Activated naive CD4-positive, alpha-beta T cell treated with anti-CD3 and anti-CD28 coated beads for 36 hours (primary cell): ENCODE measurements at regions of chr17 and their contacts with region 1.

Region 1: GRCh38 chr17:51153210-51154072 is at the start of gene NME1:
- DNase-seq: peak; percentile 99
- H3K4me3 Mint-ChIP-seq: no peak within 1 kb of the TSS
- H3K27ac Mint-ChIP-seq: no peak within 1 kb of the TSS
- H3K4me1 Mint-ChIP-seq: peaks cover 27% of the 10 kb centered on the region
- H3K27me3 Mint-ChIP-seq: no peaks in the 10 kb centered on the region
- total RNA-seq, gene NME1: 259 to 263 TPM

Region 2: DNA sequence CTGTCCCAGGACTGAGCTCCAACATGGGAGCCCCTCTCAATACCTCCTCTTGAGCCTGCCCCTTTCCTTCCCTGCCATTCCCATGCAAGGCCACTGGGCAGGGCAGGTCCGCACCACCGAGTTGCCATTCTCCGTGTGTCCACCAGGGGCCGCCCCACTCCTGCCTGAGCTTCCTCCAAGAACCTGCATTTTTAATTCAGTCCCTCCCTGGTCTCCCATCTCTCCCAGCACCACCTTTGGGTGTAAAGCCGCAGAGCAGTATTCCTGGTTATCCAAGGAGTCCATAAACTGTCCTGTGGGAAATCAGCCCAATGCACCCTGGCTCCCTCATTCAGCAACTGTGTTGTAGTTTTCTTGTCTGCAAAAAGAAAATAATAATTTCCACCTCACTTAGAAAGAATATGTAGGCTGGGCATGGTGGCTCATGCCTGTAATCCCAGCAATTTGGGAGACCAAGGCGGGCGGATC is 370.2 kb before region 1 on chr17:
- CTCF ChIA-PET with region 1: interaction called, 3 read pairs
- intact Hi-C with region 1: loop called (anchors 2 kb)
- DNase-seq: peak; percentile 90
- H3K4me3 Mint-ChIP-seq: no peak overlapping the region
- H3K27ac Mint-ChIP-seq: no peak overlapping the region
- H3K4me1 Mint-ChIP-seq: peaks cover 21% of the 10 kb centered on the region
- H3K27me3 Mint-ChIP-seq: peaks cover 4% of the 10 kb centered on the region

Region 3: DNA sequence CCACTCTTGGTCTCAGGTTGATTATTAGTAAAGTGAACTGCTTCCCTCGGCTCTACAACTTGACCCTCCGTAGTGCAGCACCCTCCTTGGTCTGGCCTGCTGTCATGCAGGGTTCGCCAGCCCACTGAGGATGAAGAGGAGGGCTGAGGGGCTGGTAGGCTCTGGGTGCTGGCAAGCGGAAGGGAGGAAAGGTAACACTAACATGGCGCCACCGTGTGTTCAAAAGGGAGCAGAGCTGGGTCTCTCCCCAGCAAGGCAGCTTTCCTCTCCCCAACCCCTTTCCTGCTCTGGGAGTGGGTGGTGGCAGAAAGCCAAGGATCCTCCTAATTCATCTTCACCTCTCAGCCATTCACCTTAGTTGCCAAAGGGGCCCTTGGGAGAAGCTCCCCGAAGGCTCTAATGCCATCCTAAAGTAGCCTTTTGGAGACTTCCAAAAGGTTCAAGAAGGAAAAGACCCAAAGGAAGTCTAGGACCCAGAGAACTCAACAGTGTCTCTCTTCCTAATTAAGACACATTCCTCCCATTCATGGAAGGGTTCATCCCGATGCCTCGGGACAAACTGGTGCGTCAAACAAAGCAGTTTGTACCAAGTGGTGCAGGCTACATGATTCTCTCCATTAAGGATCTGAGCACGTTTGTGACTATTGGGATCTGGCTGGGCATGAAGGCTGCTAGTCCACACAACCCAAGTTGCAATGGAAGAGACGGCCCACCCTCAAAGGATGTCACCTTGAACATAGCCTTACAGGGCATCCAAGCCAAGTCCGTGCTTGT is 196.5 kb before region 1 on chr17:
- CTCF ChIA-PET with region 1: no interaction called
- intact Hi-C with region 1: loop called (anchors 1 kb)
- DNase-seq: peak; percentile 83
- H3K4me3 Mint-ChIP-seq: no peak overlapping the region
- H3K27ac Mint-ChIP-seq: peak overlapping the region; percentile 53
- H3K4me1 Mint-ChIP-seq: peaks cover 2% of the 10 kb centered on the region
- H3K27me3 Mint-ChIP-seq: no peaks in the 10 kb centered on the region

Region 4: GRCh38 chr17:51029568-51030463 is 123.6 kb before region 1 on chr17:
- CTCF ChIA-PET with region 1: interaction called, 5 read pairs
- intact Hi-C with region 1: loop called (anchors 1 kb)
- DNase-seq: no peak
- H3K4me3 Mint-ChIP-seq: no peak overlapping the region
- H3K27ac Mint-ChIP-seq: peak overlapping the region; percentile 22
- H3K4me1 Mint-ChIP-seq: peaks cover 29% of the 10 kb centered on the region
- H3K27me3 Mint-ChIP-seq: no peaks in the 10 kb centered on the region

Region 5: GRCh38 chr17:51166197-51166986 is 13.0 kb after region 1 on chr17 and contains the start of gene NME2:
- CTCF ChIA-PET with region 1: interaction called, 13 read pairs
- intact Hi-C with region 1: loop called (anchors 1 kb)
- DNase-seq: peak; percentile 50
- H3K4me3 Mint-ChIP-seq: peak within 1 kb of the TSS; percentile 81
- H3K27ac Mint-ChIP-seq: peak within 1 kb of the TSS; percentile 90
- H3K4me1 Mint-ChIP-seq: peaks cover 29% of the 10 kb centered on the region
- H3K27me3 Mint-ChIP-seq: no peaks in the 10 kb centered on the region
- total RNA-seq, gene NME2: 1,086 to 1,094 TPM

Region 6: GRCh38 chr17:51240275-51240674 is 86.8 kb after region 1 on chr17:
- CTCF ChIA-PET with region 1: no interaction called
- intact Hi-C with region 1: no loop called
- DNase-seq: no peak
- H3K4me3 Mint-ChIP-seq: no peak overlapping the region
- H3K27ac Mint-ChIP-seq: no peak overlapping the region
- H3K4me1 Mint-ChIP-seq: peaks cover 23% of the 10 kb centered on the region
- H3K27me3 Mint-ChIP-seq: no peaks in the 10 kb centered on the region

Region 7: DNA sequence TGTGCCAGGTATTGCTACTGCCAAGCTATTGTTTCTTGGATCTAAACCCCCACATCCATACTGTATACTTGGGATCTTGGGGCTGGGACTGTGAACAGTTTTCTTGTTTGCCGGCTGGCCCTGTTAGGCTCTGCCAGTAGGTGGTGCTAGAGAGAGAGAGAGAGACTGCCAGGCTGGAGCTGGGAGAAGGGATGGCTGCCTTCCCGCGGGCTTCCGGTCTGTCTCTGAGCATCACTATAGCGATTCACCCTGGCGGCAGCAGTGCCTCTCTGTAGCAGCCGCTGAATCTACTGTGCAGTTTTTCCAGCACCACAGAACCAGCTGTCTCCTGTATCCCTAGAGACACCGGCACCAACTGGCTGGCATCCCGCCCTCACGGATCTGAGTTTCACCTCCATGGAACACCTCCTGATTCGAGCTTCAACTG is 308.1 kb after region 1 on chr17:
- CTCF ChIA-PET with region 1: no interaction called
- intact Hi-C with region 1: no loop called
- DNase-seq: peak; percentile 76
- H3K4me3 Mint-ChIP-seq: no peak overlapping the region
- H3K27ac Mint-ChIP-seq: no peak overlapping the region
- H3K4me1 Mint-ChIP-seq: peaks cover 2% of the 10 kb centered on the region
- H3K27me3 Mint-ChIP-seq: no peaks in the 10 kb centered on the region